Naive thymus-derived CD8-positive, alpha-beta T cell (primary cell): ENCODE measurements at regions of chr10 and their contacts with region 1.

Region 1: GRCh38 chr10:14959276-14960057 is at the start of gene MEIG1:
- DNase-seq: peak; percentile 86 to 100 (median 94)
- ATAC-seq: peak; percentile 86 to 90
- H3K4me3 Mint-ChIP-seq: peak within 1 kb of the TSS; percentile 93 to 98 (median 96)
- H3K27ac Mint-ChIP-seq: peak within 1 kb of the TSS; percentile 95 to 99 (median 97)
- H3K4me1 Mint-ChIP-seq: peaks cover 14 to 36% (median 35%) of the 10 kb centered on the region in 4 donors
- H3K27me3 Mint-ChIP-seq: no peaks in the 10 kb centered on the region
- polyA plus RNA-seq, gene MEIG1: 0.55 to 2.2 TPM in 2 of 3 donors, not detected in the other

Region 2: DNA sequence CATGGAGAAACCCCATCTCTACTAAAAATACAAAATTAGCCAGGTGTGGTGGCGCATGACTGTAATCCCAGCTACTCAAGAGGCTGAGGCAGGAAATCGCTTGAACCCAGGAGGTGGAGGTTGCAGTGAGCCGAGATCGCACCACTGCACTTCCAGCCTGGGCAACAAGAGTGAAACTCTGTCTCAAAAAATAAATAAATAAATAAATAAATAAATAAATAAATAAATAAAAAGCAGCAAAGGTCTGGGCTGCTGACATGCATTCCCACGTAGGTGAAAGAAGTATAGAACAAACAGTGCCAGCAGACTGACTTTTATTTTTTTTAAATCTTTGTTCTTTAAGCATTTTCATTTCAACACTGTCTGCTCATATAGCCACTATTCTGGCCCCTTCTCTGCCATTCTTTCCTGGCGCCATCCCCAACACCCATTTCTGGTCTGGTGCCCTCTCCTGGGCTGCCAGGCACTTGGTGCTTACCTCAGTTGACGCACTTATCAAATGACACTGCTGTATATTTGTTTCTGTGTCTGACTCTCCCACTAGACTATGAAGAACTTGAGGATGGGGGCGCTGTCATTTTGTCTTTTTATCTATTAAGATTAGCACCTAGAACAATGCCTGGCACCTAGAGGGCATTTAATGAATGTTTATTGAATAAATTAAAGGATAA is 200.3 kb before region 1 on chr10:
- POLR2A ChIA-PET with region 1: no interaction called
- DNase-seq: peak in 2 of 10 donors; percentile 5 to 11
- ATAC-seq: peak in 1 of 2 donors; percentile 50
- H3K4me3 Mint-ChIP-seq: no peak overlapping the region
- H3K27ac Mint-ChIP-seq: no peak overlapping the region
- H3K4me1 Mint-ChIP-seq: peaks cover 0 to 21% (median 1%) of the 10 kb centered on the region in 4 donors
- H3K27me3 Mint-ChIP-seq: no peaks in the 10 kb centered on the region

Region 3: GRCh38 chr10:14878266-14879054 is 81.0 kb before region 1 on chr10 and contains the start of gene SUV39H2:
- POLR2A ChIA-PET with region 1: interaction called, 20 read pairs
- DNase-seq: peak; percentile 82 to 94 (median 89)
- ATAC-seq: peak; percentile 84 to 85
- H3K4me3 Mint-ChIP-seq: peak within 1 kb of the TSS; percentile 91 to 97 (median 94)
- H3K27ac Mint-ChIP-seq: peak within 1 kb of the TSS; percentile 66 to 98 (median 90)
- H3K4me1 Mint-ChIP-seq: peaks cover 13 to 35% (median 34%) of the 10 kb centered on the region in 4 donors
- H3K27me3 Mint-ChIP-seq: no peaks in the 10 kb centered on the region
- polyA plus RNA-seq, gene SUV39H2: 2.8 to 8.6 (median 3.7) TPM

Region 4: GRCh38 chr10:14995964-14996565 is 36.6 kb after region 1 on chr10:
- POLR2A ChIA-PET with region 1: no interaction called
- DNase-seq: no peak
- ATAC-seq: no peak
- H3K4me3 Mint-ChIP-seq: peak overlapping the region in 3 of 10 donors; percentile 36 to 51 (median 43)
- H3K27ac Mint-ChIP-seq: no peak overlapping the region
- H3K4me1 Mint-ChIP-seq: peaks cover 0 to 4% (median 0%) of the 10 kb centered on the region in 4 donors
- H3K27me3 Mint-ChIP-seq: peaks cover 0 to 5% (median 4%) of the 10 kb centered on the region in 5 donors

Region 5: DNA sequence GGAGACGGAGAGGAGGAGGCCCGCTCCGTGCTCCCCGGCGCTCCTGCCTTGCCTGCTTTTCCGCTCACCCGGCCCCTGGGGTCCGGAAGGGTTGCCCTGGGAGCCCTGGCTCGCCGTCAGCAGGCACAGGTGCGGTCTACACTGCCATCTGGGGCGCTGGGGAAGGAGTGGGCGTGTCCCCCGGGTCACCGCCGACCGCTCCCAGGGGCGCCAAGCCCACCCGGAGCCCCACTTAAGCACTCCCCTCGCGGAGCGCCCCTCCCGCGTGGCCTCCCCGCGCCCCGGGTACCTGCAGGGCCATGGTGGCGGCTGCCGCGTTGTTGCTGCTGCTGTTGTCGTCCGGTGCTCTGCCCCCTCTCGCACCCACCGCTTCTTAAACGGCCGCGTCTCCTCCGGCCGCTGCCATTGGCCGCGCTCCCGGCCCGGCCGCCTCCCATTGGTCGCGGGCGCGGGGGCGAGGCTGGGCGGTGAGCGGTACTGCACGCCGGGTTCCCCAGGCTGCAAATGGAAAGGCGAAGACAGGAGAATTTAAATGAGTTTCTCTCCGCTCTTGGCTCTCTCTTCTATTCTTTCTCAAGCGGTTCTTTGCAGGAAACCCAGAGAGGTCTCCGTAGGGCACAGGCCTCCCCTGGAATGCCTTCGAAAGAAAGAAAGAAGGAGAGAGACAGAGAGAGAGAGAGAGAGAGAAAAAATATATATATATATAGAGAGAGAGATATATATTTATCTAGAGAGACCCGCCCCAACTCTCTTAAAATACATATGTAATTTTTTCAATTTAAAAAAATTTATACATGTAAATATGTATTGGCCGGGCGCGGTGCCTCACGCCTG is 129.2 kb after region 1 on chr10 and contains the start of gene ACBD7:
- POLR2A ChIA-PET with region 1: no interaction called
- DNase-seq: peak; percentile 69 to 83 (median 78)
- ATAC-seq: peak; percentile 98 to 99
- H3K4me3 Mint-ChIP-seq: peak within 1 kb of the TSS; percentile 68 to 86 (median 82)
- H3K27ac Mint-ChIP-seq: peak within 1 kb of the TSS in 2 of 10 donors; percentile 27 to 57
- H3K4me1 Mint-ChIP-seq: peaks cover 0 to 15% (median 0%) of the 10 kb centered on the region in 4 donors
- H3K27me3 Mint-ChIP-seq: no peaks in the 10 kb centered on the region
- polyA plus RNA-seq, gene ACBD7: 0.19 TPM in 1 of 3 donors, not detected in the others